ENCODE measurements at regions of chr14 and their contacts with region 1.

Region 1: DNA sequence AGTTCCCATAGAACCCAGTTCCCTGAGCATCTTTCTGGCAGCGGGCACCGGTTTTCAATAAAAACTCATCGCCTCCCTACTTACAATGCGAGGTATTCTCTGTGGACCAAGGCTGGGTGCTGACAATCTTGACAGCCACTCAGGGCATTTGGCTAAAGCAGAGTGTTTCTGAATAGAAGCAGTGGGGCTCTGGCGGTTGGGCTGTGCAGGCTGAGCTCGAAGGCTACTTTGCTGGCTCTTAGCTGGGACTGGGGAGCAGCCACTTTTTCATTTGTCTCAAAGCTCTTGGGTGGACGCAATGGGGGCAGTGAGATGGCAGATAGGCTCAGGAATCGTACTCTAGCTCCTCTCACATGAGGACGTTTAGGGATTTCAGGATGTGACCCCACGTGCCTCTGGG is 151.8 kb downstream of the UNC79 start:
- DNase-seq: no peak
- ATAC-seq: no peak
- H3K4me3 ChIP-seq: no peak overlapping the region
- H3K4me3 Mint-ChIP-seq: no peak overlapping the region
- H3K27ac ChIP-seq: no peak overlapping the region
- H3K27ac Mint-ChIP-seq: no peak overlapping the region
- H3K4me1 ChIP-seq: no peaks in the 10 kb centered on the region
- H3K4me1 Mint-ChIP-seq: no peaks in the 10 kb centered on the region
- H3K27me3 ChIP-seq: peaks cover 0 to 2% (median 0%) of the 10 kb centered on the region in 4 experiments
- H3K27me3 Mint-ChIP-seq: no peaks in the 10 kb centered on the region
- CTCF ChIP-seq: no peak

Region 2: GRCh38 chr14:93571275-93571674 is 11.2 kb before region 1 on chr14:
- CTCF ChIA-PET with region 1: no interaction called
- POLR2A ChIA-PET with region 1: interaction called, 10 read pairs
- intact Hi-C with region 1: no loop called
- DNase-seq: no peak
- ATAC-seq: no peak
- H3K4me3 ChIP-seq: no peak overlapping the region
- H3K4me3 Mint-ChIP-seq: no peak overlapping the region
- H3K27ac ChIP-seq: no peak overlapping the region
- H3K27ac Mint-ChIP-seq: no peak overlapping the region
- H3K4me1 ChIP-seq: no peaks in the 10 kb centered on the region
- H3K4me1 Mint-ChIP-seq: no peaks in the 10 kb centered on the region
- H3K27me3 ChIP-seq: peaks cover 0 to 4% (median 0%) of the 10 kb centered on the region in 4 experiments
- H3K27me3 Mint-ChIP-seq: peaks cover 19% of the 10 kb centered on the region
- CTCF ChIP-seq: no peak

Measured in B cell (primary cell).